ENCODE measurements at regions of chr6 and their contacts with region 1.

Region 1: GRCh38 chr6:106979427-106979884 is 4.9 kb upstream of the CD24 start:
- H3K4me3 ChIP-seq: no peak overlapping the region
- H3K27ac ChIP-seq: no peak overlapping the region
- H3K4me1 ChIP-seq: no peaks in the 10 kb centered on the region
- CTCF ChIP-seq: peak; percentile 77

Region 2: GRCh38 chr6:106451439-106451838 is 528.0 kb before region 1 on chr6:
- CTCF ChIA-PET with region 1: interaction called, 25 read pairs
- POLR2A ChIA-PET with region 1: no interaction called
- H3K4me3 ChIP-seq: no peak overlapping the region
- H3K27ac ChIP-seq: no peak overlapping the region
- H3K4me1 ChIP-seq: no peaks in the 10 kb centered on the region
- CTCF ChIP-seq: no peak

Region 3: DNA sequence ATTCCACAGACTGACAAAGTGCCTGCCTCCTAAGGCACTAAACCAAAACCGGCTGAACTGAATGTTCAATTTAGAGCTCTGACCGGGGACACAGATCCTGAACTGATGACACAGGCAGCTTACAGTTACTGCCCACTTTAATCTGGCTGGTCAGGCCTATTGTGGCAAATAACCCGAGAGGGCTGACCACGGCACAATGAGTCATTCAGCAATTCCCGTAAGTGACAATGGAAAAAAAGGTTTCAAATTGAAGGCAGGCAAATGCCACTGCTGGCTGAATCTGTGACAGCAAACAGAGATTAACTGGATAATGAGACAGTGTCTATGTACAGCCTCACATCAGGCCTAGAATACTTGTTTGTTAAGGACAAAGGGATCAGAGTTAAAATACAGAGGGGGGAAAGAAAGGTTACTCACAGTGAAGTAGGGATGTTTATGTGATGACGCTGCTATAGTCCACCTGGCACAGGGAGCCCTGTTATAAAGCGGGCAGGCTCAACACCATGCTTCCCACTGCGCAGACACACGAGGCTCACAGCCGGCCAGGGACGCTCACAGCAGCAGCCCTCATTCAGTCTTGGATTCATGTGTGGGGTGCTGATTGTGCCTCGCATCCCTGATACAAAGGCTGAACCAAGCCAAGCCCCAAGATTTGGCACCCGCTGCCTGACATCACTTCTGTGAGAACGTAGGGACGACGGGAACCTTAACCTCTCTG is 404.6 kb before region 1 on chr6:
- CTCF ChIA-PET with region 1: interaction called, 15 read pairs
- POLR2A ChIA-PET with region 1: no interaction called
- H3K4me3 ChIP-seq: no peak overlapping the region
- H3K27ac ChIP-seq: no peak overlapping the region
- H3K4me1 ChIP-seq: no peaks in the 10 kb centered on the region
- CTCF ChIP-seq: no peak

Region 4: GRCh38 chr6:106629103-106629858 is 350.2 kb before region 1 on chr6 and contains the starts of genes QRSL1 and RTN4IP1:
- CTCF ChIA-PET with region 1: interaction called, 11 read pairs
- POLR2A ChIA-PET with region 1: no interaction called
- H3K4me3 ChIP-seq: peak within 1 kb of the TSS; percentile 57
- H3K27ac ChIP-seq: peak within 1 kb of the TSS; percentile 61
- H3K4me1 ChIP-seq: 0 out of 2 replicates have a peak, but pooled peaks cover 3% of the 10 kb centered on the region
- CTCF ChIP-seq: no peak

Region 5: DNA sequence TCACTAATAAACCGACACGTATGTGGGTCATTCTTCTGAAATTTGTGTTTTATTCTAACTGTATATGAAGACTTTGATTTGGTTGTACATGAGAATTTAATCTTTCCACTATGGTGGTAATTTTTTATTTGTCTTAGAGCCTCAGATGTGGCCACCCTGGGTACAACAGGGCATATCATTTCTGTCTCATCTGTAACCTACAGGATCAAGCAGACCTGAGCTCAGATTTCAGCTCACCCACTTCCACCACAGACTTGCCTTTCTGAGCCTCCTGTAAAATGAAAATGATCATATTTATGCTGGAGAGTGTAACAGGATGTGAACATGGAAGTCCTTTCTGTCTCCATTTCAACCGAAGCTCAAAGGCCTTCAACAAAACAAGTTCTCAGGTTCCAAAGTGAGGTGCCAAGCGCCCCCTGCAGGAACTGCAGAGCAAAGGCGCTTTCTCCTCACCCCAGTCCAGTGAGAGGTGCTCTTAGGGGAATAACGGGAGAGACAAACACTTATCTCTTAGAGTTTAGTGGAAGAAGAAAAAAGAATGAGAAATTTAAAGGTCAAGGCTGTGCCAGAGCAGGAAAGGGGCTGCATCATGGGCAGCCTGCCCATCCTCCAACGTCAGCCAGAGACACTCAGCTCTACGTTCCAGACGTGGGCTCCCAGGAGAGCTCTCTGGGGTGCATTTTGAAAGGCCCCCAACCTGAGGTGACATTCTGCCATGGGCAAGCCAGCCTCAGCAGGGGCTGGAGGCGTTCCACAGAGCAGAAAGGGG is 18.1 kb after region 1 on chr6:
- CTCF ChIA-PET with region 1: interaction called, 24 read pairs
- POLR2A ChIA-PET with region 1: no interaction called
- H3K4me3 ChIP-seq: no peak overlapping the region
- H3K27ac ChIP-seq: no peak overlapping the region
- H3K4me1 ChIP-seq: no peaks in the 10 kb centered on the region
- CTCF ChIP-seq: peak; percentile 41; the same call in 1 of the 2 replicates

Region 6: DNA sequence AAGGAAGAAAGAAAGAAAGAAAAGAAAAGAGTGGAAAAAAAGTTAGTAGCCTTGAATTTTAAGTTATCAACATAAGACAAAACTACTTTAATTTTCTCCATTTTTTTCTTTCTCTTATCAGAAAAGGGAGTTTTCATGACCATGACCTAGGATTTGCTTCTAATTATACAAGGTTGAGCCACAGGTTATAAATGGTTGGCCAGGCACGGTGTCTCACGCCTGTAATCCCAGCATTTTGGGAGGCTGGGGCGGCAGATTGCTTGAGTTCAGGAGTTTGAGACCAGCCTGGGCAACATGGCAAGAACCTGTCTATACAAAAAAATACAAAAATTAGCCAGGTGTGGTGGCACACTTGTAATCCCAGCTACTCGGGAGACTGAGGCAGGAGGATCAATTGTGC is 40.8 kb after region 1 on chr6:
- CTCF ChIA-PET with region 1: no interaction called
- POLR2A ChIA-PET with region 1: no interaction called
- H3K4me3 ChIP-seq: no peak overlapping the region
- H3K27ac ChIP-seq: no peak overlapping the region
- H3K4me1 ChIP-seq: no peaks in the 10 kb centered on the region
- CTCF ChIP-seq: no peak

Measured in HEK293 (cell line).